PC-3 (cell line): ENCODE measurements at regions of chr7 and their contacts with region 1.

Region 1: GRCh38 chr7:80584778-80585177 is 53.7 kb upstream of the CD36 start:
- DNase-seq: peak; percentile 16
- ATAC-seq: no peak
- H3K4me3 ChIP-seq: no peak overlapping the region
- H3K27ac ChIP-seq: no peak overlapping the region
- H3K4me1 ChIP-seq: peaks cover 8% of the 10 kb centered on the region
- H3K27me3 ChIP-seq: no peaks in the 10 kb centered on the region
- CTCF ChIP-seq: no peak

Region 2: DNA sequence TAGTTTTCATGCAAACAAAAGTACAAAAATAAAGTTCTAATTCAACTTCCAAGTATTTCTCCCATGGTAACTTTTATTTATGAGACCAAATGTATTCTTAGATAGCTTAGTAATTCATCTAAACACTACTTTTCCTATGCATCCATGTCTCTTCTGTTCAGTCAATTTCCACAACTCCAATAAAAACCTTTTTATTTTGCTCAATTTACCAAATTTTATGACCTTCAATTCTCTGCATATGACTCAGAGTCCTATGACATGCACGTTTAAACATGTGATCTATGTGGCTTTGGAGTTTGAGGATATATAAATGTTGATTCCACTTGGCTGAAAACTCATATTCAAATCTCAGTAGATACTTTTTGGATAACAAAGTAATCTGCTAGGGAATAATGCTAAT is 32.5 kb before region 1 on chr7:
- CTCF ChIA-PET with region 1: no interaction called
- POLR2A ChIA-PET with region 1: no interaction called
- intact Hi-C with region 1: loop called (anchors 2 kb)
- DNase-seq: peak; percentile 76
- ATAC-seq: peak; percentile 51
- H3K4me3 ChIP-seq: no peak overlapping the region
- H3K27ac ChIP-seq: peak overlapping the region; percentile 74
- H3K4me1 ChIP-seq: peaks cover 38% of the 10 kb centered on the region
- H3K27me3 ChIP-seq: no peaks in the 10 kb centered on the region
- CTCF ChIP-seq: no peak

Region 3: DNA sequence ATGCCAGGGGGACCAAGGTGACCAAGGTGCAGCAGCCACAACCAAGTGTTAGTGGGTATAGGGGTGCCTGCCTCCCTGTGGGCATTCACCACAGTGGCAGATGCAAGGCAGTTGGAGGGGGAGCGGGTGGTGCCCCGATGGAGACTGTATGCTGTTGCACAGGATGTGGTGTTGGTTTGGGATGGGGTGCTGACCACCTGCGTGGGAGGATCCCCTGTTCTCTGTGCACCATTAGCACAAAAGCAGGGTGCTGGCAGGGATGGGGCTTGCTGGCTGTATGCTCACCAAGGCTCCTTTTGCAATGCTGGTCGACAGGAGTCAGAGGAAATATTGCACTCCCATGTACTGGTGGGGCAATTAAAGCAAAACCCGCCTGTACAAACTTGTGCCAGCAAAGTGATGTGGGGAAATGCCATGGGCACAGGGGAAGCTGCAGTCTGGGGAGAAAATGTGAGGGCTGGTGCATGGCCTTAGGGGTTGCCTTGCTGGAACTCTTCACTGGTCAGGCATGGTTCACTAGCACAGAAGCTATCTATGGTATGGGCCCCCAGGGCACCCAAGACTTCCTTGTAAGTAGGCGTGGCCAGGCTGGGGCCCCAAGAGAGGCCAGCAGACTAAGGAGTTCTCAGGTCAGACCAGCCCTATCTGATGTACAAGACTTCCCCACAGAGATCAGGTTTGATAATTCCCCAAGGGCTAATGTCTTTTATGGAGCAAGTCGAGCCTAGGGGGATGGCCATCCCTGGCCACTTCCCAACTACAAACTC is 21.0 kb before region 1 on chr7:
- CTCF ChIA-PET with region 1: no interaction called
- POLR2A ChIA-PET with region 1: no interaction called
- intact Hi-C with region 1: loop called (anchors 2 kb)
- DNase-seq: peak; percentile 21
- ATAC-seq: peak; percentile 22; the same call in 1 of the 2 replicates
- H3K4me3 ChIP-seq: no peak overlapping the region
- H3K27ac ChIP-seq: no peak overlapping the region
- H3K4me1 ChIP-seq: no peaks in the 10 kb centered on the region
- H3K27me3 ChIP-seq: no peaks in the 10 kb centered on the region
- CTCF ChIP-seq: no peak

Region 4: DNA sequence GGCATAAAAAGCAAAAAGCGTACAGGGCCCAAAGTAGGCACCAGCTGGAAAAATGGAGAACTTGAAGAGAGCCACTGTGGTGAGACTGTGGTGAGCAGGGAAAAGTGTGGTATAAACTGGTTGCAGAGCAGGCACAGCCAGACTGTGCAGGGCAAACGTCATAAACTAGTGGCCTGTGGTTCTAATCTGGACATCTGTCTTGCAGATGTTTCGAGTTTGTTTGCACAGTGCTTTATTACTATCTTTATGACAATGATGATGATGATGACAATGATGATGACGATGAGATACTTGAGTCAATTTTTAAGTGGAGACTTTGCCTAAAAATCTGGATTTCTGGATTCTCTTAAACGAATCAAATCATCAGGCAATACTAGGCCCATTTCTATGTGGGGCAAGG is 288.4 kb after region 1 on chr7:
- CTCF ChIA-PET with region 1: no interaction called
- POLR2A ChIA-PET with region 1: interaction called, 15 read pairs
- intact Hi-C with region 1: no loop called
- DNase-seq: no peak
- ATAC-seq: no peak
- H3K4me3 ChIP-seq: no peak overlapping the region
- H3K27ac ChIP-seq: no peak overlapping the region
- H3K4me1 ChIP-seq: peaks cover 40% of the 10 kb centered on the region
- H3K27me3 ChIP-seq: no peaks in the 10 kb centered on the region
- CTCF ChIP-seq: no peak